ENCODE measurements at regions of chrX and their contacts with region 1.

Region 1: DNA sequence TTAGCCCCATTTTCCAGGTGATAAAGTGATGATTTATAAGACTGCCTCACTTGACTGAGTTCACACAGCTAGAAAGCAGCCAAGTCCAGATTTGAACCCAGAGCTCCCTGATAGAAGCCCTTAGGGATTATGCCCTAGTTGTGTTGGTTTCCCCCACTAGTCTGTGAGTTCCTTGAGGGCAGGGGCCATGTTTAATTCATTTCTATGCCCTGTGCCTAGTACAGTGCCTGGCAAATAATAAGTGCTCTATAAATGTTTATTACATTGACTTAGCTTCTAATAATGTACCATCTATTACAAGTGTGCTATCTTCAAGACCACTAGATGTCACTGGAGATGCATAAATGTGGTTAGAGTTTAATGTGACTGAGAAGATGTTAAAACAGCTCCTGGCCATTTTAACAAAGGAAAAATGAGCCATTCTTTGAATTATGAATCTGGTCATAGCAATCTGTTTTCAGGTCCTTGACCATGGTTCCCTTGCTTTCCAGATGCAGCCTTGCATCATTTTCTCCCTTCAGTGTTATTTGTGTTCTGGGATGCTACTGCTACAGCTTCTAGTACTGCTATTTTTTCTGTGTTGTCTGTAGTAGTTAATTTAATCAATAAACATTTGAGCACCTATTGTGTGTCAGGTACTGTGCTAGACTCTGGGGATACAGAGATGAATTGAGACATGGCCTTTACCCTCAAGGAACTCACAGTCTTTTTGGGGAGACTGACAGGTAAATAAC is 43.2 kb downstream of the SLC9A6 start:
- DNase-seq: no peak
- ATAC-seq: peak in 3 of 4 donors; percentile 16 to 47 (median 36)
- H3K4me3 ChIP-seq: no peak overlapping the region
- H3K27ac ChIP-seq: peak overlapping the region in 8 of 12 donors; percentile 54 to 97 (median 86)
- H3K4me1 ChIP-seq: peaks cover 0 to 34% (median 10%) of the 10 kb centered on the region in 12 donors
- H3K27me3 ChIP-seq: peaks cover 0 to 5% (median 0%) of the 10 kb centered on the region in 9 donors
- CTCF ChIP-seq: peak; percentile 36 to 66 (median 62)
- POLR2A ChIP-seq: no peak

Region 2: GRCh38 chrX:135951291-135951690 is 77.1 kb before region 1 on chrX:
- intact Hi-C with region 1: no loop called
- DNase-seq: no peak
- ATAC-seq: no peak
- H3K4me3 ChIP-seq: no peak overlapping the region
- H3K27ac ChIP-seq: no peak overlapping the region
- H3K4me1 ChIP-seq: no peaks in the 10 kb centered on the region
- H3K27me3 ChIP-seq: peaks cover 0 to 2% (median 0%) of the 10 kb centered on the region in 9 donors
- CTCF ChIP-seq: no peak
- POLR2A ChIP-seq: no peak

Region 3: DNA sequence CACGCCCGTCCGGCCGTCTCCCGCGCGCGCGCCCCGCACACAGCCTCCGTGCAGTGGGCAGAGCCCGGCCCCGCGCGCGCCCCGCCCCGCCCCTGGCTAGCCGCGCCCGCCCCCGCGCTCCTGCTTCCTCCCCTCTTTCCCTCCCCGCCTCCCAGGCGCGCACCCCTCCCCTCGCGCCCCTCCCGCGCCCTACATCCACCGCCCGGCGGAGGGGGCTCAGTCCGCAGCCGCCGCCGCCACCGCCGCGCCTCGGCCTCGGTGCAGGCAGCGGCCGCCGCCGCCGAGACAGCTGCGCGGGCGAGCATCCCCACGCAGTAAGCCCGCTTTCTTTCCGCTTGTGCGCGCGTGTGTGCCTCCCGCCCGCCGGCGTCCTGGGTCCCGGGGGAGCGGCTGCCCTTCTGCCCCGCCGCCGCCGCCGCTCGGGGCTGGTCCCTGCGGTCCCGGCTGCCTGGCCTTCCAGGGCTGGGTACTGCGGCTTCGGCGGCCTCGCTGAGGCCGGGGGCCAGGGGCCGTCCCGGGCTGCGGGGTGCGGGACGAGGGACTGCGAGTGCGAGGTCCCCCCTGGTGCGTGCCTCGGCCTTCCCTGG is 119.0 kb after region 1 on chrX and contains the start of gene FHL1:
- intact Hi-C with region 1: loop called in 4 of 10 experiments (anchors 5 kb)
- DNase-seq: peak; percentile 75 to 84 (median 77)
- ATAC-seq: peak; percentile 80 to 95 (median 90)
- H3K4me3 ChIP-seq: peak within 1 kb of the TSS; percentile 58 to 97 (median 76)
- H3K27ac ChIP-seq: peak within 1 kb of the TSS; percentile 71 to 98 (median 90)
- H3K4me1 ChIP-seq: peaks cover 0 to 16% (median 3%) of the 10 kb centered on the region in 12 donors
- H3K27me3 ChIP-seq: peaks cover 0 to 24% (median 0%) of the 10 kb centered on the region in 9 donors
- CTCF ChIP-seq: no peak
- POLR2A ChIP-seq: peak in 1 of 2 donors; percentile 67
- total RNA-seq, gene FHL1: 1,446 to 4,800 (median 2,127) TPM

Region 4: DNA sequence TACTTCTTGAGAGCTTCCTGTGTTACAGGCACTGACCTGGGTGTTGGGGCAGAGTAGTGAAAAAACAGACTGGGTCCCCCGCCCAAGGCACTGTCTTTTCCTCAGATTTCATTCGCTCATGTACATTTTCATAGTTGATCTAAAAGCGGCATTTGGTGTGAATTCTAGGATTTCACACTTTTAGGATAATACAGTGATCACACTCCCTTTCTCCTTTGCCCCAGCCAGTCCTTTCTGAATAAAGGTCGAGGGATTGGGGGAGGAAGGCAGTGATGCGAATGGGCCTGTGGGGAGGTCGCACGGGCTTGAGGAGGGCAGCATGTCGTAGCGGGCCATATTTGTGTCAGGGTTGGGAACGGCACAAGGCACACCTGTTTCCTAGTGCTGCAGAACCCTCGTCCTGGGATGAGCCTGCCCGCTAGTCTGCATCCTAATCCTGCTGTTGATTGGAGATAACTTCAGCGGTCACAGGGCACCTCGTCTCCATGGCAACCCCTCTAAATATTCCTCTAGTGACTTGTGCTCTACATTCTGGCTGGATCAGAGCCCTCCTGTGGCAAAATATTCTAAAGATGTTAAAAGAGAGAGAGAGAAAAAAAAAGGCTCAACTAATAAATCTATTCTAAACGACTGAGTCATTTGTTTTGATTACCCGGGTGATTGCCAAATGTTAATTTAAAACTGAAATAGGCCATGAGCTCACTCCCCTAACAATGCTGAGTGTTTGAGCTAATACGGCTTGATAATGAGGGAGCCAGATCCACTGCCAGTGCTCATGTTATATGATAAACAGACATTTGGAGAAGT is 140.7 kb after region 1 on chrX:
- intact Hi-C with region 1: loop called in 5 of 10 experiments (anchors 2 to 5 kb)
- DNase-seq: peak; percentile 53 to 75 (median 63)
- ATAC-seq: peak; percentile 83 to 87 (median 84)
- H3K4me3 ChIP-seq: peak overlapping the region in 8 of 12 donors; percentile 7 to 37 (median 18)
- H3K27ac ChIP-seq: peak overlapping the region; percentile 63 to 95 (median 83)
- H3K4me1 ChIP-seq: peaks cover 0 to 69% (median 24%) of the 10 kb centered on the region in 12 donors
- H3K27me3 ChIP-seq: peaks cover 0 to 8% (median 0%) of the 10 kb centered on the region in 9 donors
- CTCF ChIP-seq: peak in 1 of 12 donors; percentile 4
- POLR2A ChIP-seq: no peak

Region 5: DNA sequence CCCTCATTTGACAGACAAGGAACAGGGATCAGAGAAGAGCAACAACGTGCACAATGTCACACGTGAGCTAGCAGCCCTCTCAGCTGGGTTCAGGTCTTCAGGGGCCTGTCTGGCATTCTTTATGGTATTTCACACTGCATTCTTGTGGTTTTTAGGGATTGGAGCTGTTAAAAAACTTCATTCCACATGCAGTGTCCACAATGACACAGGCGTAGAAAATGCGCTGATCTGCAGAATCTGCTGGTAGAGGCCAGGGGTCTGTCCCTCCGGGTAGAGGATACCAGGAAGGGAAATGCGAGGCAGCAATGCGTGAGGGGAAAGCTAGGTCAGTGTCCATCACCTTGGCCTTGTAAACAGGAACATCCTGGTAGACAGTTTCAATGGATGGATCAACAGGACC is 186.1 kb after region 1 on chrX:
- intact Hi-C with region 1: loop called in 8 of 10 experiments (anchors 2 to 5 kb)
- DNase-seq: no peak
- ATAC-seq: no peak
- H3K4me3 ChIP-seq: no peak overlapping the region
- H3K27ac ChIP-seq: peak overlapping the region in 2 of 12 donors; percentile 29 to 44
- H3K4me1 ChIP-seq: peaks cover 0 to 22% (median 0%) of the 10 kb centered on the region in 12 donors
- H3K27me3 ChIP-seq: peaks cover 0 to 11% (median 0%) of the 10 kb centered on the region in 9 donors
- CTCF ChIP-seq: no peak
- POLR2A ChIP-seq: no peak

Region 6: GRCh38 chrX:136268051-136269048 is 239.9 kb after region 1 on chrX:
- intact Hi-C with region 1: loop called (anchors 1 to 10 kb)
- DNase-seq: peak in 2 of 5 donors; percentile 25 to 28
- ATAC-seq: peak in 3 of 4 donors; percentile 45 to 63 (median 49)
- H3K4me3 ChIP-seq: no peak overlapping the region
- H3K27ac ChIP-seq: no peak overlapping the region
- H3K4me1 ChIP-seq: no peaks in the 10 kb centered on the region
- H3K27me3 ChIP-seq: peaks cover 0 to 5% (median 0%) of the 10 kb centered on the region in 9 donors
- CTCF ChIP-seq: peak; percentile 59 to 82 (median 69)
- POLR2A ChIP-seq: no peak

Region 7: DNA sequence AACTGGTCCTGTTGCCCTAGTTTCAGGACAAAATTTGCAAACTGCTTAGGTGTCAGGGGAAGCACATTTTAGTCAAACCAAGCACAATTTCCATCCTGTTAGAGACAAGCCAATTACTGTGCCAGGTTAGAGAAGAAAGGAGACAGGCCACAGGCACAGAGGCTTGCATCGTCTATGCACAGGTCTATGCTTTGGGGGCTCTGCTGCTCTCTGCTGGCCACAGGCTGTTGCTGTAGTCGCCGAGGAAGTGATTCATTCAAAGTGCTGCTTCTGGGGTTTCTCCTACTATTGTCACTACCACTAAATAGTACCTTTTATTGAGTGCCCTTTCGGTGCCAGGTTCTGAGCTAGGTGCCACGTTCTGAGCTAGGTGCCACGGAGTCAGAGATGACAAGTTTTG is 549.1 kb after region 1 on chrX:
- intact Hi-C with region 1: loop called in 2 of 10 experiments (anchors 5 to 10 kb)
- DNase-seq: peak; percentile 12 to 59 (median 52)
- ATAC-seq: peak; percentile 67 to 91 (median 82)
- H3K4me3 ChIP-seq: no peak overlapping the region
- H3K27ac ChIP-seq: no peak overlapping the region
- H3K4me1 ChIP-seq: peaks cover 0 to 12% (median 2%) of the 10 kb centered on the region in 12 donors
- H3K27me3 ChIP-seq: peaks cover 0 to 7% (median 0%) of the 10 kb centered on the region in 9 donors
- CTCF ChIP-seq: peak; percentile 38 to 73 (median 54)
- POLR2A ChIP-seq: no peak

Measured in heart left ventricle (tissue), 16 donors.